Esophagus squamous epithelium (tissue), 5 donors: ENCODE measurements at regions of chr17 and their contacts with region 1.

Region 1: DNA sequence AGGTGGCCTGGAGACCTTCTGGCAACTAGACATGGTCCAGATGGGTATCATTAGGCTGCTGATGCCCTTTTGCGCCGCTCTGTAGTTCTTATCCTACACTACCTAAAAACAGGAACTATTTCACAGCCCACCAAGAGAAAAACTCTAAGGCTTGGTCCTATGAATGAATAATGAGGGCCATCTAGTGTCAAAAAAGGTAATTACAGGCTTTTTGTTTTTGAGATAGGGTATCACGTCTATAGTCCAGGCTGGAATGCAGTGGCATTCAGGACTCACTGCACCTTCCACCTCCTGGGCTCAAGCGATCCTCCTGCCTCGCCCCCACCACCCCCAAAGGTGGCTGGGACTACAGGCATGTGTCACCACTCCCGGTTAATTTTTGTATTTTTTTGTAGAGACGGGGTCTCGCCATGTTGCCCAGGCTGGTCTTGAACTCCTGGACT is 20.9 kb downstream of the COIL start:
- DNase-seq: no peak
- H3K4me3 ChIP-seq: no peak overlapping the region
- H3K27ac ChIP-seq: peak overlapping the region in 1 of 4 donors; percentile 2
- H3K4me1 ChIP-seq: peaks cover 7 to 28% (median 17%) of the 10 kb centered on the region in 3 donors
- H3K27me3 ChIP-seq: no peaks in the 10 kb centered on the region
- CTCF ChIP-seq: peak; percentile 51 to 74 (median 67)
- POLR2A ChIP-seq: no peak

Region 2: DNA sequence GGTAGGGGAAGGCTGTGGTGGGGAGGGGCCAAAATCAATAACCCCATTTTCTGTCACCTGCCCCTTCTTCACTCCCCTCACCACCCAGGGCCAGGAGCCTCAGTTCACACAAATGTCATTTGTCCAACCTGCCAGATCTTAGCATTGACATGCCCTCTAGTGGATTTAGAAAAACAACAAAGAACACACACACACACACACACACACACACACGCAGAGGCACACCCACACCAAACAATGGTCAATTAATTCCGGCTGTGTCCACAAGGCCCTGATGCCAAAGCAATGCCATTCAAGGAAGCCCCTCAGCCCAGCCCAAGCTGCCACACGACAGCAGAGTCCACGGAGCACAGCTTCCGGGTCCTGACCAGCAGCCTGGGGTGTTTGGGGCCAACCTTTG is 278.0 kb before region 1 on chr17:
- intact Hi-C with region 1: no loop called
- DNase-seq: no peak
- H3K4me3 ChIP-seq: no peak overlapping the region
- H3K27ac ChIP-seq: no peak overlapping the region
- H3K4me1 ChIP-seq: no peaks in the 10 kb centered on the region
- H3K27me3 ChIP-seq: peaks cover 0 to 26% (median 0%) of the 10 kb centered on the region in 4 donors
- CTCF ChIP-seq: no peak
- POLR2A ChIP-seq: no peak

Region 3: DNA sequence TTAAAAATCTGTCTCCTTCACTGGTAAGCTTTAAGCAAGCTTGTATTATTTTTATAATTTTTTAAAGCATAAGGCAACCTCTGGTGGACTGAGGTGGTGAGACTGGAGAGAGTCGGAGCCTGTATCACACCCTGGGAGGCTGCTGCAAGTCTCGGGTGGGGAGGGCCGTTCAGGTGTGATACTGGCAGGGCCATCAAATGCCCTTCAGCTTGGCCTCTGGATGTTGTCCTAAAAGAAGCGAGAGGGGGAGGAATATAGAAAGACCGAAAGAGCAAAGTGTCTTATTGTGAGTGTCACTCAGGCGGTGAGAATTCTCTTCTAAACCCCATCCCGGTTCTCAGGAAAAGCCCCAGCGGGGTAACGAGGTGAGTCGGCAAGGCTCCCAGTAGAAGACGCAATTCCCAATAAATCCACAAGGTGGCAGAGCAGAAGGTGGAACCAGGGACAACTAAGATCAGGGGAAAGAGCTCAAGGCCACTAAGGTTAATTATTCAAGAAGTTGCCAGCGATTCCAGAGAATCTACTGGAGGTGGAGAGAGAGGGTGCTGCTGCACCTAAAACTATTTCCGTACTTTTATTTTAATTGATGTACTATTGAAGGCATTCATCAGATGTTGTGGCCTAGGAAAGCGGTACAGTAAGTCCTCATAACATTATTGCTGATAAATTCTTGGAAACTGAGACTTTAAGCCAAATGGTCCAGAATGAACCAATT is 120.3 kb before region 1 on chr17:
- intact Hi-C with region 1: loop called (anchors 5 kb)
- DNase-seq: no peak
- H3K4me3 ChIP-seq: no peak overlapping the region
- H3K27ac ChIP-seq: no peak overlapping the region
- H3K4me1 ChIP-seq: peaks cover 0 to 9% (median 3%) of the 10 kb centered on the region in 3 donors
- H3K27me3 ChIP-seq: no peaks in the 10 kb centered on the region
- CTCF ChIP-seq: peak; percentile 84 to 91 (median 89)
- POLR2A ChIP-seq: no peak

Region 4: DNA sequence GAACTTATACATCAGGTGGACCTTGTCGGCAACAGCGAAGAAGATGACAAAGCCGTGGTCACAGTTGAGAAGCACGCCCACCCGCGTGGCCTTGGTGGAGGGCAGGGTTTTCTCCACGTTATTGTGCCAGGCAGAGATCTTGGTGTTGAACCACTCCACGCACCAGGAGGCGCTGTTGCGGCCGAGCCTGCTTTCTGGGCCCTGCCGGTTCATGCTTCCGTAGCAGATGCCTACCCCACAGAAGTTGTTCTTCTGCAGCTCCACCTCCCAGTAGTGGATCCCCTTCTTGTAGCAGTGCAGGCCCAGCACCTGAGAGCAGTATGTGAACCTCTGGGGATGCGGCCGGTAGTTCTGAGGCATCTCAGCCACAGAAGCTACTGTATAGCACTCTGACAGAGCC is 48.1 kb before region 1 on chr17:
- intact Hi-C with region 1: loop called (anchors 10 kb)
- DNase-seq: no peak
- H3K4me3 ChIP-seq: no peak overlapping the region
- H3K27ac ChIP-seq: no peak overlapping the region
- H3K4me1 ChIP-seq: peaks cover 0 to 5% (median 0%) of the 10 kb centered on the region in 3 donors
- H3K27me3 ChIP-seq: no peaks in the 10 kb centered on the region
- CTCF ChIP-seq: peak in 5 of 6 experiments; percentile 24 to 45 (median 30)
- POLR2A ChIP-seq: no peak